Psoas muscle (tissue), 8 donors: ENCODE measurements at regions of chr2 and their contacts with region 1.

Region 1: GRCh38 chr2:35410431-35411061 is 945.0 kb upstream of the CRIM1 start:
- DNase-seq: peak; percentile 45 to 60
- ATAC-seq: no peak
- H3K4me3 ChIP-seq: no peak overlapping the region
- H3K27ac ChIP-seq: no peak overlapping the region
- H3K4me1 ChIP-seq: no peaks in the 10 kb centered on the region
- H3K27me3 ChIP-seq: no peaks in the 10 kb centered on the region
- CTCF ChIP-seq: peak; percentile 73

Region 2: GRCh38 chr2:33673937-33674336 is 1736.6 kb before region 1 on chr2:
- intact Hi-C with region 1: loop called in 1 of 2 experiments (anchors 10 kb)
- DNase-seq: no peak
- ATAC-seq: no peak
- H3K4me3 ChIP-seq: no peak overlapping the region
- H3K27ac ChIP-seq: no peak overlapping the region
- H3K4me1 ChIP-seq: no peaks in the 10 kb centered on the region
- H3K27me3 ChIP-seq: no peaks in the 10 kb centered on the region
- CTCF ChIP-seq: peak; percentile 40

Region 3: GRCh38 chr2:34004936-34005335 is 1405.6 kb before region 1 on chr2:
- intact Hi-C with region 1: loop called in 1 of 2 experiments (anchors 10 kb)
- DNase-seq: no peak
- ATAC-seq: no peak
- H3K4me3 ChIP-seq: no peak overlapping the region
- H3K27ac ChIP-seq: no peak overlapping the region
- H3K4me1 ChIP-seq: no peaks in the 10 kb centered on the region
- H3K27me3 ChIP-seq: no peaks in the 10 kb centered on the region
- CTCF ChIP-seq: no peak

Region 4: DNA sequence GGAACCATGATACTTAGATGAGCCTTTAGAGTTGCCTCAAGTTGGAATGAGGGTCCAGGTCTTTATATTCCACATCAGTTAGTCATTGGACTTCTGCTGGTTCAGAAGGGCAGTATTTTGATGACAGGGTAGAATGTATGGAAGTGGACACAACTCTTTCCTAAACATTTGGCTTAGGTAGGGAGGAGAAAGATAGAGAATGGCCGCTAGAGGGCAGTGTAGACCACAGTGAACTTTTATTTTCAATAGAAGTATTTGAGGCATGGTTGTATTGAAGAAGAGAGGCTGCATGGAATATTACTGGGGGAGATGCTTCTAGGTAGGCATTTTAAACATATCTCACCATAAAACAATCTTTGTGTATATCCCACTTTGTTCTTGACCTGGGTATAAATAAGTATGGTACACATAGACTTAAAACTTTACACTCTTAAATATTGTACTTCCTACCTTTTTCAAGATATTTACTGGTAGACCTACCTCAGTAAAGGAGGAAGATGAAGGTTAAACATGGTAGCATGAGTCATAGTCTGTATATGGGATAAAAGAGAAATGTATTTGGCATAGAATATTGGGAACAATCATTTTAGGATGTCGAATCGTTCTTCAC is 1313.9 kb before region 1 on chr2:
- intact Hi-C with region 1: loop called (anchors 5 to 10 kb)
- DNase-seq: no peak
- ATAC-seq: peak in 2 of 4 donors; percentile 28 to 43
- H3K4me3 ChIP-seq: no peak overlapping the region
- H3K27ac ChIP-seq: no peak overlapping the region
- H3K4me1 ChIP-seq: no peaks in the 10 kb centered on the region
- H3K27me3 ChIP-seq: peaks cover 0 to 1% (median 0%) of the 10 kb centered on the region in 3 donors
- CTCF ChIP-seq: peak; percentile 59

Region 5: GRCh38 chr2:34105015-34105767 is 1305.4 kb before region 1 on chr2:
- intact Hi-C with region 1: loop called in 1 of 2 experiments (anchors 10 kb)
- DNase-seq: no peak
- ATAC-seq: no peak
- H3K4me3 ChIP-seq: no peak overlapping the region
- H3K27ac ChIP-seq: no peak overlapping the region
- H3K4me1 ChIP-seq: no peaks in the 10 kb centered on the region
- H3K27me3 ChIP-seq: no peaks in the 10 kb centered on the region
- CTCF ChIP-seq: no peak

Region 6: GRCh38 chr2:35510636-35511035 is 100.1 kb after region 1 on chr2:
- intact Hi-C with region 1: loop called in 1 of 2 experiments (anchors 5 kb)
- DNase-seq: no peak
- ATAC-seq: no peak
- H3K4me3 ChIP-seq: no peak overlapping the region
- H3K27ac ChIP-seq: no peak overlapping the region
- H3K4me1 ChIP-seq: no peaks in the 10 kb centered on the region
- H3K27me3 ChIP-seq: no peaks in the 10 kb centered on the region
- CTCF ChIP-seq: no peak

Region 7: DNA sequence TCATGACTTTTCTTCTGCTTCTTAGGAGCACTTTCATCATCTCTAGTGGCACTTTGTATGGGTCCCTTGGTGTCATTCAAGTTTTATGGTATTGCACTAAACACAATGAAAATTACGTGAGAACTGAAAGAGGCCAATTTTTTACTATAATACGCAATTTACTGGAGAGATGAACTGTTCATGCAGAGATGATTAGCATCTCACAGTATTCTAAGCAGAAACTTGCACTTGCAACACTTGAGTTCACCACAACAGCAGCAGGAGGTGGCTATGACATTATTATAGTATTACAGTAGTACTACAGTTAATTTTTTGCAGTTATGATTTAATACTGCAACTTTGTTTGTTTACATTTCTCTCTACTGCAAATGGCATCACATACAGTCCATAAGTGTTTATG is 151.9 kb after region 1 on chr2:
- intact Hi-C with region 1: no loop called
- DNase-seq: no peak
- ATAC-seq: no peak
- H3K4me3 ChIP-seq: no peak overlapping the region
- H3K27ac ChIP-seq: no peak overlapping the region
- H3K4me1 ChIP-seq: no peaks in the 10 kb centered on the region
- H3K27me3 ChIP-seq: no peaks in the 10 kb centered on the region
- CTCF ChIP-seq: no peak